Prostate gland (tissue), 2 donors: ENCODE measurements at regions of chr12 and their contacts with region 1.

Region 1: GRCh38 chr12:63967358-63968145 is 123.1 kb downstream of the SRGAP1 start:
- DNase-seq: no peak
- H3K4me3 ChIP-seq: no peak overlapping the region
- H3K27ac ChIP-seq: no peak overlapping the region
- H3K4me1 ChIP-seq: no peaks in the 10 kb centered on the region
- H3K27me3 ChIP-seq: no peaks in the 10 kb centered on the region
- CTCF ChIP-seq: no peak
- POLR2A ChIP-seq: no peak

Region 2: DNA sequence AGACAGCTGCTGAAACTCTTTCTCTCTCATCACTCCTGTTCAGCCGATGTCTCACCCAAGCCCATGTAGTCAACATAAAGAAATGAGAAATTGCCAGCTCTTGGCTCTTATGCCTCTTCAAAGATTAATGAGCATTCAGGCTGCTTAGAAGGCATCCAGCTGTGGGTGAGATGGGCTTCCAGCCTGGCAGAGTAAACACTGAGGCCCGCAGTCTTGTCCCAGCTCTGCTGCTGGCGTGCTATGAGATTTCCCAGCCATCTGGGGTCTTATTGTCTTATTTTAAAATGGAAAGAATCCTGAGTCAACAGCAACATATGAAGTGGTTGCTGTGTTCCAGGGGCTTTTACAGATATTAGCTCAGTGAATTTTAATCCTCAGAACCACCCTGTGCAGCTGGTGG is 175.2 kb before region 1 on chr12:
- intact Hi-C with region 1: no loop called
- DNase-seq: no peak
- H3K4me3 ChIP-seq: no peak overlapping the region
- H3K27ac ChIP-seq: no peak overlapping the region
- H3K4me1 ChIP-seq: no peaks in the 10 kb centered on the region
- H3K27me3 ChIP-seq: no peaks in the 10 kb centered on the region
- CTCF ChIP-seq: no peak
- POLR2A ChIP-seq: no peak

Region 3: DNA sequence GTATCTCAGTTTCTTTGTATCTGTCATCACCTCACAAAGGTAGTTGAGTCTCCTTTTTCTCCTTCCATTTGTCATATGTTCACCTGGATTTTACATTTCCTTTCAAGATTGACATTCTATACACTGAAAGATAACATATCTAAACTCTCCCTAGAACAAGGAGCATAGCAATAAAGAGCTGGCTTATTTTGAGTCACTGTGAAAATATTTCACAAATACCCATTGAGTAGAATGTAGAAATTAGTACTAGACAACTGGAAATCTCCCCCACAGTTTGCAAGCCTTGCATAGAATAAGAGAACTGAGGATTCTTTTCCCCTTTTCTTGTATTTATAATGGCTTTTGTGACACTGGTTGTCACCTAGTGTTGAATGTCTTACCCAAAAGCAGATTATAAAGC is 143.3 kb after region 1 on chr12:
- intact Hi-C with region 1: loop called (anchors 10 kb)
- DNase-seq: no peak
- H3K4me3 ChIP-seq: no peak overlapping the region
- H3K27ac ChIP-seq: no peak overlapping the region
- H3K4me1 ChIP-seq: no peaks in the 10 kb centered on the region
- H3K27me3 ChIP-seq: no peaks in the 10 kb centered on the region
- CTCF ChIP-seq: no peak
- POLR2A ChIP-seq: no peak